A673 (cell line): ENCODE measurements at regions of chr6 and their contacts with region 1.

Region 1: GRCh38 chr6:92399911-92400310 is 1019.4 kb downstream of the EPHA7 start:
- DNase-seq: no peak
- H3K4me3 ChIP-seq: no peak overlapping the region
- H3K27ac ChIP-seq: no peak overlapping the region
- H3K4me1 ChIP-seq: no peaks in the 10 kb centered on the region
- H3K27me3 ChIP-seq: no peaks in the 10 kb centered on the region
- CTCF ChIP-seq: no peak

Region 2: DNA sequence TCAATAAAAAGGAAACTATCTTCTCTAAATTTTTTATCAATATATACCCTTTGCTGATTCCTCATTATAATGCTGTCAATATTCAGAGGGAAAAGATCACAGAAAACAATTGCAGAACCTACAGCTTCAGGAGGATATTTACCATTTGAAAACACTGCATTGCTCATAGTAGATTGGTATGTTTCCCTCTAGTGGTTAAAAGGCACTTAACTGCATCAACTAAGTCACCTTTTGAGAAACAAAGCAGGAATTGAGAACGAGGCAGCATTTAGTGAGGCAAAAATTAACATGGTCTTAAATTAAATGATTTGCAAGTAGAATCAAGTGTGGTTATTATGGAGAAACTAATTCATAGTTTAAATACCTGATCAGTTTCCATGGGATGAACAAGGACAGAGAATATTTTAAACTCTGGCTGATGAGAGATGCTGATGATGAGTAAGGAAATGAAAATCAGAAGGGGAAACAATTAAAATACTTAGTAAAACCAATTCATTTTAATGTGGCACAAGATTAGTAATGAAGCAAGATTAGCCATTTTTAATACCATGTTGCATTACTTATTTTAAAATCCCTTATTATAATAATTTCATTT is 377.3 kb after region 1 on chr6:
- CTCF ChIA-PET with region 1: no interaction called
- POLR2A ChIA-PET with region 1: no interaction called
- intact Hi-C with region 1: loop called (anchors 10 kb)
- DNase-seq: peak; percentile 50
- H3K4me3 ChIP-seq: no peak overlapping the region
- H3K27ac ChIP-seq: no peak overlapping the region
- H3K4me1 ChIP-seq: peaks cover 13% of the 10 kb centered on the region
- H3K27me3 ChIP-seq: no peaks in the 10 kb centered on the region
- CTCF ChIP-seq: peak; percentile 66